ENCODE measurements at regions of chr12 and their contacts with region 1.

Region 1: DNA sequence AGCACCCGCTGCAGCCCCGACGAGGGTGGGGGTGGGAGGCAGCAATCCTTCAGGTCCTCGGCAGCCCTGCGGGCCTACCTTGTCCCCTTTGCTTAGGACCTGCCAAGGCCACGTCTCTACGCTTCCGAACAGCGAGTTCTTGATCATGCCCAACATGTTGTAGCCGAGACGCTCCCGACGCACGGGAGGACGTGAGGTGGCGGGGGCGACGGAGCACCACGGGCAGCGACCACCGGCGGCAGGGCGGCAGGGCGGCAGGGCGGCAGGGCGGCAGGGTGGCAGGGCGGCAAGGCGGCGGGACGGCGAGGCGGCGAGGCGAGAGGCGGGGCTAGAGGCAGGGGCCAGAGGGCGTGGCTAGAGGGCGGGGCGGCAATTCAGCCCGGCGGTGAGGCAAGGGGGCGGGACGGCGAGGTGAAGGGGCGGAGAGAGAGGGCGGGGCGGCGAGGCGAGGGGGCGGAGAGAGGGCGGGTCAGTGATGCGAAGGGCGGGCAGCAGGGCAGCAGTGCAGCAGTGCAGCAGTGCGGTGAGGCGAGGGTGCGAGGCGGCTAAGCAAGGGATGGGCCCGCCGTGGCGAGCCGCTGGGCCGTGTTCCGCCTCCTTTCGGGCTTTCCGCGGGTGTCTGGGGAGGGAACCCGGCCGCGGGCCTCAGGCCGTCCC is at the start of gene HEBP1:
- DNase-seq: peak; percentile 97
- H3K4me3 Mint-ChIP-seq: peak within 1 kb of the TSS; percentile 77
- H3K27ac Mint-ChIP-seq: peak within 1 kb of the TSS; percentile 31
- H3K4me1 Mint-ChIP-seq: peaks cover 26% of the 10 kb centered on the region
- H3K27me3 Mint-ChIP-seq: peaks cover 6% of the 10 kb centered on the region
- total RNA-seq, gene HEBP1: 28.7 to 32.3 TPM

Region 2: GRCh38 chr12:12724661-12725545 is 275.2 kb before region 1 on chr12:
- CTCF ChIA-PET with region 1: no interaction called
- intact Hi-C with region 1: loop called (anchors 2 kb)
- DNase-seq: peak; percentile 94
- H3K4me3 Mint-ChIP-seq: peak overlapping the region; percentile 85
- H3K27ac Mint-ChIP-seq: peak overlapping the region; percentile 98
- H3K4me1 Mint-ChIP-seq: peaks cover 51% of the 10 kb centered on the region
- H3K27me3 Mint-ChIP-seq: no peaks in the 10 kb centered on the region

Region 3: GRCh38 chr12:12899530-12900380 is 100.3 kb before region 1 on chr12:
- CTCF ChIA-PET with region 1: no interaction called
- intact Hi-C with region 1: loop called (anchors 1 kb)
- DNase-seq: peak; percentile 91
- H3K4me3 Mint-ChIP-seq: no peak overlapping the region
- H3K27ac Mint-ChIP-seq: peak overlapping the region; percentile 90
- H3K4me1 Mint-ChIP-seq: peaks cover 31% of the 10 kb centered on the region
- H3K27me3 Mint-ChIP-seq: peaks cover 4% of the 10 kb centered on the region

Region 4: GRCh38 chr12:12983420-12984035 is 16.6 kb before region 1 on chr12:
- CTCF ChIA-PET with region 1: interaction called, 3 read pairs
- intact Hi-C with region 1: loop called (anchors 1 kb)
- DNase-seq: peak; percentile 38
- H3K4me3 Mint-ChIP-seq: no peak overlapping the region
- H3K27ac Mint-ChIP-seq: no peak overlapping the region
- H3K4me1 Mint-ChIP-seq: no peaks in the 10 kb centered on the region
- H3K27me3 Mint-ChIP-seq: no peaks in the 10 kb centered on the region

Region 5: DNA sequence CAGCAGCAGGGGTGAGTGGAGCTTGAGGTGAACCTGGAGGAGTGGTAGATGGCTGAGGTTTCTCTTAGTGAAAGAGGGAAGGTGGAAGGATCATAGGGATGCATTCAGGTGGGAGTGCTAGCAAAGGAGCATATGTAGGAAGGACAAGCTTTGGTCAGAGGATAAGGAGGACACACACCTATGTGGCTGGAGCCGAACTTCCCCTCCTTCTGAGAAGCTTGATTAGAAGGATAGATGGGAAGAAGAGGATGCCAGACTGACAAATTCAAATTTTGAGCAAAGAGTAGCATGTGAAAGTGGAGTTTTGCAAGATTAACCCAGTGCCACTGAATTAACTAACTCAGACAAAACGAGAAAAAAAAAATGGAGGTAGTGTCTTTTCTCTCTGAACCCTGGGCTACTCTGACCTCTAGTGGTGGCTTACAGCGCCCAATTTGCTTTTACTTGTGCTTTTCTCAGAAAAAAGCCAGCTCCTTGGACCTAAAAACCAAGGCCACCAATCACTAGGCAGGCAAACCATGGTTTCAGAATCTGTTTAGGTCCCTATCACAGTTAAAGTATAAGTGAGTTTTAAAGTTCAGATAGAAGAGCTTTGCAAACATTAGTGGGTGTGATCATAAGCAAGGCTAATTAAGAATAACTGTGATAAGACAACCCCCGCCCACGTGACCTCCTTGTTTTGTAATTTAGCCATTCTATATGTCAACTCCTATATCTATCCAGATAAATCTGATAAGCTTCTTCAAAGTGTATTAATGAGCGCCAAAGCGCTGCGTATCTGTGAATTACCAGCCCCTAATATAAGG is 212.0 kb after region 1 on chr12:
- CTCF ChIA-PET with region 1: interaction called, 5 read pairs
- intact Hi-C with region 1: loop called (anchors 1 kb)
- DNase-seq: peak; percentile 86
- H3K4me3 Mint-ChIP-seq: no peak overlapping the region
- H3K27ac Mint-ChIP-seq: no peak overlapping the region
- H3K4me1 Mint-ChIP-seq: peaks cover 20% of the 10 kb centered on the region
- H3K27me3 Mint-ChIP-seq: peaks cover 2% of the 10 kb centered on the region